ENCODE measurements at regions of chr15 and their contacts with region 1.

Region 1: DNA sequence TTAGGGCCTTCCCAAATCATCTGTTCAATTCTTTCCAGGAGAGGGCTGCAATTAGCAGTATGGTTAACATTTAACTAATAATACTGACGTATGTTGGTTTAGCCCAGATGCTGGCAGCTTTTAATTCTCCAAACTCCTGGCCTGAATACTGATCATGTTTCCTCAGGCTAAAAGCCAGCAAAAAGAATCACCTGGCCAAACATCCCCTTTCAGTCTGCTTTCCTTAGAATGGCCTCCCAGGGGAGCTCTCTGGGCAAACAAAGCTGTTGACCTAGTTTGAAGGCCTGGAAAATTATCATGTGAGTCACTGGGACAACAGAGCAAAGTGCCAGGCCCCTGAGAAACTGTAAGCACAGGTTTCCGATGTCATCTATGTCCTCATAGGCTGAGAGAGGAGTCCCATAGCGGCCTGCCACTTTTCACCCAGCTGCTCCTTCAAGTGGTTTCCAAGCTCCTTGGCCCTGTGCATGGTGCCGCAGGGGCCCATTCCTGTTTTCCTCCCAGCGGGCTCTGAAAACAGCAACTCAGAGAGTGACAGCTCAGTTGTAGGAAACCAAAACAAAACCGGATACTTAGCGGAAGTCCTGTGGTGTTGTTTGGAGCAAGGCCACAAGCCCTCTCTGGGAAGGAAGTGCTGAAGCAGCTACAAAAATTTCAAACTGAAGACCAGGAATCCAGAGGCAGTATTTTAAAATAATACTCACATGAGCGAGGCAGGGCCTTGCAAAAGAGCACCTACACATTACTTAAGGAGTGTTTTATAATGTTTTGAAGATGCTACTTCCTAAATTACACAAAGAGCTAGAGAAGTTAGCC is 36.5 kb upstream of the RAB11A start:
- DNase-seq: peak; percentile 99
- ATAC-seq: peak; percentile 97
- H3K4me3 ChIP-seq: peak overlapping the region; percentile 9; the same call in 2 of the 3 replicates
- H3K27ac ChIP-seq: peak overlapping the region; percentile 59 to 74
- H3K4me1 ChIP-seq: peaks cover 48% of the 10 kb centered on the region
- CTCF ChIP-seq: peak; percentile 26; the same call in 2 of the 3 replicates
- EP300 ChIP-seq: peak; percentile 73 to 82; a peak in 3 of 5 replicates
- POLR2A ChIP-seq: no peak
- RAD21 ChIP-seq: peak; percentile 28 to 67; a peak in 4 of 5 replicates

Region 2: DNA sequence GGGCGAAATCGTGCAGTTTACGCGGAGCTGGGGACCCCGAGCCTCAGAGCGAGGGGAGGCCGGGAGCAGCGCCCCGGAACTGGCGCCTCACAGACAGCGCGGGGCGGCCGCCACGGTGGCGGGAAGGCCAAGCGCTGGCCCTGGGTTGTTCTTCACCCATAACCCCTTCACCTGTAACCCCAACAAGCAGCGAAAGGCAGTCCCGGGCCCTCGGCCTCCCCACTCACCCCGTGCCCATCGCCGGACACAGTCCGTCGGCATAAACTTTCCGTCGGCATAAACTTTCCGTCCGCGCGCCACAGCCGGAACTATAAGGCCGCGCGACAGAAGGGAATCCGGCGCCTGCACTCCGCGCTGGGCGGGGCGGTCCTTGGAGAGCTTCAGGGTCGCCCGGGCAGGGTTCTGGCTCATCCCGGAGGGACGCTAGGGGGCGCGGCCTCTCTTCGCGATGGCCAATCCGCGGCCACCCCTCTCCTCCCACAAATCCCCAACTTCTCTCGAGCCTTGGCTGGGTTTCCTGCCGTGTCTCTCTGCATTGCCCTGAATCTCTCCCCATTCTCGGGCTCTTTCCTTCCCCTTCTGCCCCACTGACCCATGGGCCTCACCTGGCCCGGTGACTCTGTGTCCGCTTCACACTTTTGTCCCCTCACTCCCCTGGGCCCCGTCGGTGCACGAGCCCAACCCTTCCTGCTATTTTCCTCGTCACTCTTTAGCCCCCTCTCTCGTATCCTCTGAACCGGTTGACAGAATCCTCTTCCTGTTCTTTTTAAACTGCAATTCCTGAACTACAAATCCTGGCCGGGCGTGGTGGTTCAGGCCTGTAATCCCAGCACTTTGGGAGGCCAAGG is 221.7 kb before region 1 on chr15 and contains the start of gene INTS14:
- CTCF ChIA-PET with region 1: interaction called, 4 read pairs
- POLR2A ChIA-PET with region 1: interaction called, 20 read pairs
- DNase-seq: peak; percentile 97 to 99
- ATAC-seq: peak; percentile 97 to 99
- H3K4me3 ChIP-seq: peak within 1 kb of the TSS; percentile 83
- H3K27ac ChIP-seq: peak within 1 kb of the TSS; percentile 93 to 94
- H3K4me1 ChIP-seq: peaks cover 18% of the 10 kb centered on the region
- CTCF ChIP-seq: peak; percentile 81
- EP300 ChIP-seq: no peak
- POLR2A ChIP-seq: peak; percentile 86
- RAD21 ChIP-seq: peak; percentile 59 to 82
- polyA plus RNA-seq, gene INTS14: 81.4 and 82.1 TPM in 2 replicates

Region 3: GRCh38 chr15:65644152-65644681 is 188.5 kb before region 1 on chr15:
- CTCF ChIA-PET with region 1: interaction called, 20 read pairs
- POLR2A ChIA-PET with region 1: no interaction called
- DNase-seq: no peak
- ATAC-seq: no peak; a peak in 1 of 6 replicates
- H3K4me3 ChIP-seq: no peak overlapping the region
- H3K27ac ChIP-seq: no peak overlapping the region
- H3K4me1 ChIP-seq: no peaks in the 10 kb centered on the region
- CTCF ChIP-seq: no peak
- EP300 ChIP-seq: no peak
- POLR2A ChIP-seq: no peak
- RAD21 ChIP-seq: no peak

Region 4: DNA sequence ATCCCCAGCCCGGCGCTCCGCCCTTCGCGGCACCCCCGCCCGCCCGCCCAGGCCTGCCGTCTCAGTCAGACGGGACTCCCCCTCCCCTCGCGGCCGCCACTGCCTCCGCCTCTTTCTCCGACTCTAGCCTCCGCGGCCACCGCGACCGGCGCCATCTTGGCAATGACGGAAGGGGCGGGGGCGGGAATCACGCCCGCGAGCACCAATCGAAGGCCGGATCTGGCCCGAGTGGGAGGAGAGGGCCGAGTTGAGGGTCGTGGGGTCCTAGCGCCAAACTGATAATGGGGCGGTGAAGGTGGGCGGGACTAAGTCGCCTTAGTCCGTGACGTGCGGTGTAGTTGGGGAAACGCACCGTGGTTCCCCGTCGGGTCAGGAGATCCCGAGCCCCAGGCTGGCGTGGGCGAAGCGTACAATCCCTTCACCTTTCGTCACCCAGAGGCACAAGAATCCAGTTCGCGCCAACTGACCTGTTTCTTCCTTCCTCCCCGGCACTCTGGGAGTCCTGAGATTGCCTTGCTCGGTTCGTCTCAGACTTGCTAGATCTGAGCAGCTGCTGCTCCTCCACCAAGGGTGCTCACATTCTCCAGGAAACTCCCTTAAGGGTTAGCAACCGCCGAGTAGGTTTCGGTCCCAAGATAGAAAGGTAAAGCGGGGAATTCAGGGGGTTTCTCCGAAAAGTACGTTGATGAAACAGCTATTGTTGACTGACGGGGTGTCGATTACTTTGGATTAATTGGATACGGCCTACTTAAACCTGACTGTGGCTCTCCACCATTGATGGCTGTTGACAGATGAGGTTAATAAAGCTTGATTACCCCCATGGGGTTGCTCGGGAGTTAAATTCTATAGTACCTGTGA is 40.4 kb before region 1 on chr15 and contains the start of gene DENND4A:
- CTCF ChIA-PET with region 1: interaction called, 13 read pairs
- POLR2A ChIA-PET with region 1: interaction called, 13 read pairs
- DNase-seq: peak; percentile 91 to 99
- ATAC-seq: peak; percentile 86 to 92
- H3K4me3 ChIP-seq: peak within 1 kb of the TSS; percentile 72
- H3K27ac ChIP-seq: peak within 1 kb of the TSS; percentile 77 to 89
- H3K4me1 ChIP-seq: peaks cover 38% of the 10 kb centered on the region
- CTCF ChIP-seq: no peak
- EP300 ChIP-seq: no peak
- POLR2A ChIP-seq: peak; percentile 93
- RAD21 ChIP-seq: no peak
- polyA plus RNA-seq, gene DENND4A: 16.8 and 18.7 TPM in 2 replicates

Region 5: DNA sequence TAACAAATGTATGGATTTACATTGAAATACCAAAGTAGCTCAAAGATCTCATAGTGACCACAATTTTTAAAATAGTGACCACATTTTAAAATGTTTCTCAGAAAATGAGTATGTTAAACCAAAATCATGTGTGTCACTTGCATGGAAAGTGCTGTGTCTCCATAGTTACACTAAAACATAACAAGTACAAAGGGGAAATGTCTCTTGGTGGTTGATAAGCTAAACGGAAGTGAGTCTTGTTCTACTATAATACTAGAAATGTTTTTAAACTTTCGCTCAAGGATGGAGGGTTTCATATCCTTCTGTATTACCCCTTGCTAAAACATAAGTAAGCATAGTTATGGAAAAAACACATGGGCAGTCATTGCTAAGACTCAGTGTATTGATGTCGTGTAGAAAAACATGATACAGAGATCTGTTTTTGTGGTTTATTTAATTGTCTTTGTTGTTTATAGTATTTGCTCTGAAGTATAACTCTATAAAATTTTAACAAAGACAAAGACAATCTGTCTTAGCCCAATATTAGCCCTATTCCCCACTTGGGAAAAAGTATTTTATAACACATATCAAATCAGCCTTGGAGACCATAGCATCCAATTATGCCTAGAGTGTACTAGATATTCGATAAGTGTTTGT is 13.7 kb before region 1 on chr15:
- CTCF ChIA-PET with region 1: interaction called, 20 read pairs
- POLR2A ChIA-PET with region 1: no interaction called
- DNase-seq: no peak
- ATAC-seq: no peak
- H3K4me3 ChIP-seq: no peak overlapping the region
- H3K27ac ChIP-seq: no peak overlapping the region
- H3K4me1 ChIP-seq: no peaks in the 10 kb centered on the region
- CTCF ChIP-seq: no peak
- EP300 ChIP-seq: no peak
- POLR2A ChIP-seq: no peak
- RAD21 ChIP-seq: no peak

Region 6: GRCh38 chr15:65856821-65857455 is 24.2 kb after region 1 on chr15:
- CTCF ChIA-PET with region 1: interaction called, 64 read pairs
- POLR2A ChIA-PET with region 1: no interaction called
- DNase-seq: peak; percentile 57 to 77
- ATAC-seq: peak; percentile 89 to 90
- H3K4me3 ChIP-seq: no peak overlapping the region
- H3K27ac ChIP-seq: no peak overlapping the region
- H3K4me1 ChIP-seq: no peaks in the 10 kb centered on the region
- CTCF ChIP-seq: peak; percentile 92
- EP300 ChIP-seq: no peak
- POLR2A ChIP-seq: no peak
- RAD21 ChIP-seq: peak; percentile 55 to 56; a peak in 4 of 5 replicates